ENCODE measurements at regions of chr1 and their contacts with region 1.

Region 1: GRCh38 chr1:28877132-28877781 is 37.1 kb upstream of the EPB41 start:
- DNase-seq: peak; percentile 28
- ATAC-seq: peak; percentile 84
- H3K4me3 ChIP-seq: no peak overlapping the region
- H3K27ac ChIP-seq: no peak overlapping the region
- H3K4me1 ChIP-seq: no peaks in the 10 kb centered on the region
- H3K27me3 ChIP-seq: no peaks in the 10 kb centered on the region
- CTCF ChIP-seq: peak; percentile 89 to 96 (median 93)
- EP300 ChIP-seq: no peak
- POLR2A ChIP-seq: no peak
- RAD21 ChIP-seq: peak; percentile 97

Region 2: DNA sequence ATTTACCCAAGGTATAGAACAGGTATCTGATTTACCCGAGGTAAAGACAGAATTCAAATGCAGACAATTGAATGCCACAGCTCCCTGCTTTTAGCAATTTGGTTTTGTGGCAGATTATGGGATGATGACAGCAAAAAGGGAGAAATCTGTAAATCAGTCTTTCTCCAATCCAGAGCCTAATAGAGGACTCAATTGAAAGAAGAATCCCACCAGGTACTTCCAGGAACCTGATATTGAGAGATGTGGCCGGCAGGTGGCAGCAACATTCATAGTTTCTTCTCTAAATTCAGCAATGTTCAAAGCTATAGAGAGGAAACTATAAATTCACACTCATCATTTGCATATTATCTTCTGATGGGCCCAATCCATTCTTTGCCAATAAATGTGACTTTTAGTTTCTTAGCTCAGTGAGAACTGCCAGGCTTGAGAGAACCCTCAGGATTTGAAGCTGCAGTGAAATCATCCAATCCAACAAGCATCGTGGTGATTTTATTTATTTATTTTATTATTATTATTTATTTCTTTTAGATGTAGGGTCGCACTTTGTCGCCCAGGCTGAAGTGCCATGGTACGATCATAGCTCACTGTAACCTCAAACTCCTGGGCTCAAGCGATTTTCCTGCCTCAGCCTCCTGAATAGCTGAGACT is 517.5 kb before region 1 on chr1:
- CTCF ChIA-PET with region 1: interaction called, 30 read pairs
- POLR2A ChIA-PET with region 1: no interaction called
- RAD21 ChIA-PET with region 1: interaction called, 14 read pairs
- SMC1A ChIA-PET with region 1: interaction called, 14 read pairs
- in situ Hi-C with region 1: loop called (anchors 10 kb)
- intact Hi-C with region 1: no loop called
- DNase-seq: no peak
- ATAC-seq: peak; percentile 89
- H3K4me3 ChIP-seq: no peak overlapping the region
- H3K27ac ChIP-seq: no peak overlapping the region
- H3K4me1 ChIP-seq: no peaks in the 10 kb centered on the region
- H3K27me3 ChIP-seq: no peaks in the 10 kb centered on the region
- CTCF ChIP-seq: peak; percentile 65 to 73 (median 66)
- EP300 ChIP-seq: no peak
- POLR2A ChIP-seq: no peak
- RAD21 ChIP-seq: peak; percentile 57

Region 3: DNA sequence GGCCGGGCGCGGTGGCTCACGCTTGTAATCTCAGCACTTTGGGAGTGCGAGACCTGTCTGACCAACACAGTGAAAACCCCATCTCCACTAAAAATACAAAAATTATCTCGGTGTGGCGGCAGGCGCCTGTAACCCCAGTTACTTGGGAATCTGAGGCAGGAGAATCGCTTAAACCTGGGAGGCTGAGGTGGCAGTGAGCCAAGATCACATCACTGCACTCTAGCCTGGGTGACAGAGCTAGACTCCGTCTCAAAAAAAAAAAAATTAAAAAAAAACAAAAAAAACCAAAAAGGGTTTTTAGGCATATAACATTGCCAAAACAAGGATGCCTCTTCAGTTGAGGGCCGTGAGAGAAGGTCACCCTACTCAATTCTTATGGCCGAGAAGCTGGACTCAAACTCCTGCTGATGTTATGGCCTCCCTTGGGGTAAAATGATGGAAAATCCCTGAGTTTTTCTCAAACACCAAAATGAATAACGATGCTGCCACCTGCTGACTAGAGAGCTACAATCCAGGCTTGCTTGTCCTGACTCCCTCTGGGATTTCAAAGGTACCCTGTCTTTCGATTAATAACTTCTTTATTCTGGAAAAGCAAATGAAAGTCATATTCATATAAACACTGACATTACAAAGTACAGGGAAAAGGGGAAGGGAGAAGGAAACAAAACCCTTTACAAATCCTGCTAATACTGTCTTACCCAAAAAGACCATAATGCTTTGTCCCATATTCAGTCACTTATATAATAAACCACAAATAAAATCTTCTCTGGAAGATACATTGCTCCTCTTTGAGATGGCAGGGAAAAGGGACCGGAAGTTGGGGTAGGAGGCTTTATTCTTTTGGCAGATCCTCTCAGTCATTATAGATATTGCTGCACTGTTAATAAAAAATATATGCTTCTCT is 274.5 kb before region 1 on chr1:
- CTCF ChIA-PET with region 1: interaction called, 16 read pairs
- POLR2A ChIA-PET with region 1: no interaction called
- RAD21 ChIA-PET with region 1: interaction called, 16 read pairs
- SMC1A ChIA-PET with region 1: interaction called, 8 read pairs
- in situ Hi-C with region 1: no loop called
- intact Hi-C with region 1: no loop called
- DNase-seq: no peak
- ATAC-seq: peak; percentile 57
- H3K4me3 ChIP-seq: no peak overlapping the region
- H3K27ac ChIP-seq: no peak overlapping the region
- H3K4me1 ChIP-seq: peaks cover 22% of the 10 kb centered on the region
- H3K27me3 ChIP-seq: no peaks in the 10 kb centered on the region
- CTCF ChIP-seq: peak; percentile 56 to 85 (median 59); a peak in 5 of 6 replicates
- EP300 ChIP-seq: no peak
- POLR2A ChIP-seq: no peak
- RAD21 ChIP-seq: peak; percentile 84

Region 4: GRCh38 chr1:28648474-28649198 is 228.6 kb before region 1 on chr1 and contains the start of gene RNU11:
- CTCF ChIA-PET with region 1: interaction called, 31 read pairs
- POLR2A ChIA-PET with region 1: interaction called, 7 read pairs
- RAD21 ChIA-PET with region 1: interaction called, 11 read pairs
- SMC1A ChIA-PET with region 1: interaction called, 18 read pairs
- in situ Hi-C with region 1: loop called (anchors 5 kb)
- intact Hi-C with region 1: loop called (anchors 2 kb)
- DNase-seq: peak; percentile 97
- ATAC-seq: peak; percentile 85
- H3K4me3 ChIP-seq: peak within 1 kb of the TSS; percentile 55; the same call in 1 of the 2 replicates
- H3K27ac ChIP-seq: peak within 1 kb of the TSS; percentile 99
- H3K4me1 ChIP-seq: peaks cover 11% of the 10 kb centered on the region
- H3K27me3 ChIP-seq: no peaks in the 10 kb centered on the region
- CTCF ChIP-seq: no peak
- EP300 ChIP-seq: 0 out of 4 replicates have a peak, but pooled peaks have one; percentile 37 to 54
- POLR2A ChIP-seq: peak; percentile 97
- RAD21 ChIP-seq: no peak
- polyA plus RNA-seq, gene RNU11: not detected

Region 5: GRCh38 chr1:28782011-28782410 is 95.2 kb before region 1 on chr1:
- CTCF ChIA-PET with region 1: interaction called, 268 read pairs
- POLR2A ChIA-PET with region 1: interaction called, 7 read pairs
- RAD21 ChIA-PET with region 1: interaction called, 118 read pairs
- SMC1A ChIA-PET with region 1: interaction called, 107 read pairs
- in situ Hi-C with region 1: loop called (anchors 5 kb)
- intact Hi-C with region 1: loop called (anchors 1 kb)
- DNase-seq: no peak
- ATAC-seq: no peak
- H3K4me3 ChIP-seq: no peak overlapping the region
- H3K27ac ChIP-seq: no peak overlapping the region
- H3K4me1 ChIP-seq: no peaks in the 10 kb centered on the region
- H3K27me3 ChIP-seq: no peaks in the 10 kb centered on the region
- CTCF ChIP-seq: no peak
- EP300 ChIP-seq: no peak
- POLR2A ChIP-seq: no peak
- RAD21 ChIP-seq: no peak

Region 6: DNA sequence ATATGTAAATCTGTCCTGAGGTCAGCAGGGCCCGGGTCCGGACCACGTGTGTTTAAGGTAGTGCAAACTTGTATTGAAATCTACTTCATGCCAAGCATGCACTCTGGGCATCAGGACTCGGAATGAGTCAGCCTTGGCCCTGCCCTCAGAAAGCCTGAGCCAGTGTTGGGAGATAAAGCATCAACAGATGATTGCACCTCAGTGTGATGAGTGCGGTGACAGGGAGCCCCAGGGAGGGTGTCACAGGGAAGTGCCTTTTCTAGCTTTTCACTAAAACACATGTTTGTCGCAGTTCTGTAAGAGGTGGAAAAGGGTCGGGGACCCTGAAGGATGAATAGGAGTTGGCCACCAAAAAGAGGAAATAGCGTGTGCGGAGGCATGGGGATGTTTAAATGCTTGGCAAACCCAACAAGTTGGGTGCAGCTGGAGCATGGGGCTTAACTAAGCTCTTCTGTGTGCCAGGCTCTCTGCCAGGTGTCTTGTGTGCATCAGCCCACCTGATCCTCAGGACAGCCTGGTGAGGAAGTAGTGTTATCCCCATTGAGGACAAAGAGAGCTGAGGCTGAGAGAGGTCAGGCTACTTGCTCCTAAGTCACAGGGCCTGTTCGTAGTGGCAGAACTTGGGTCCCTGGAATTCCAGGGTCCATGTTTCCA is 11.1 kb before region 1 on chr1:
- CTCF ChIA-PET with region 1: interaction called, 30 read pairs
- POLR2A ChIA-PET with region 1: no interaction called
- RAD21 ChIA-PET with region 1: interaction called, 10 read pairs
- SMC1A ChIA-PET with region 1: interaction called, 4 read pairs
- in situ Hi-C with region 1: no loop called
- intact Hi-C with region 1: no loop called
- DNase-seq: no peak
- ATAC-seq: peak; percentile 31; the same call in 2 of the 3 replicates
- H3K4me3 ChIP-seq: no peak overlapping the region
- H3K27ac ChIP-seq: no peak overlapping the region
- H3K4me1 ChIP-seq: no peaks in the 10 kb centered on the region
- H3K27me3 ChIP-seq: no peaks in the 10 kb centered on the region; a peak in 1 of 4 replicates
- CTCF ChIP-seq: no peak
- EP300 ChIP-seq: no peak
- POLR2A ChIP-seq: no peak
- RAD21 ChIP-seq: no peak

Region 7: GRCh38 chr1:29197585-29197924 is 320.3 kb after region 1 on chr1:
- CTCF ChIA-PET with region 1: interaction called, 173 read pairs
- POLR2A ChIA-PET with region 1: interaction called, 3 read pairs
- RAD21 ChIA-PET with region 1: interaction called, 91 read pairs
- SMC1A ChIA-PET with region 1: interaction called, 127 read pairs
- in situ Hi-C with region 1: loop called (anchors 5 kb)
- intact Hi-C with region 1: no loop called
- DNase-seq: no peak
- ATAC-seq: peak; percentile 97
- H3K4me3 ChIP-seq: no peak overlapping the region
- H3K27ac ChIP-seq: no peak overlapping the region
- H3K4me1 ChIP-seq: peaks cover 2% of the 10 kb centered on the region; the same call in 1 of the 2 replicates
- H3K27me3 ChIP-seq: no peaks in the 10 kb centered on the region
- CTCF ChIP-seq: peak; percentile 32 to 55 (median 47); a peak in 5 of 6 replicates
- EP300 ChIP-seq: no peak
- POLR2A ChIP-seq: no peak
- RAD21 ChIP-seq: peak; percentile 41